ENCODE measurements at regions of chr1 and their contacts with region 1.

Region 1: DNA sequence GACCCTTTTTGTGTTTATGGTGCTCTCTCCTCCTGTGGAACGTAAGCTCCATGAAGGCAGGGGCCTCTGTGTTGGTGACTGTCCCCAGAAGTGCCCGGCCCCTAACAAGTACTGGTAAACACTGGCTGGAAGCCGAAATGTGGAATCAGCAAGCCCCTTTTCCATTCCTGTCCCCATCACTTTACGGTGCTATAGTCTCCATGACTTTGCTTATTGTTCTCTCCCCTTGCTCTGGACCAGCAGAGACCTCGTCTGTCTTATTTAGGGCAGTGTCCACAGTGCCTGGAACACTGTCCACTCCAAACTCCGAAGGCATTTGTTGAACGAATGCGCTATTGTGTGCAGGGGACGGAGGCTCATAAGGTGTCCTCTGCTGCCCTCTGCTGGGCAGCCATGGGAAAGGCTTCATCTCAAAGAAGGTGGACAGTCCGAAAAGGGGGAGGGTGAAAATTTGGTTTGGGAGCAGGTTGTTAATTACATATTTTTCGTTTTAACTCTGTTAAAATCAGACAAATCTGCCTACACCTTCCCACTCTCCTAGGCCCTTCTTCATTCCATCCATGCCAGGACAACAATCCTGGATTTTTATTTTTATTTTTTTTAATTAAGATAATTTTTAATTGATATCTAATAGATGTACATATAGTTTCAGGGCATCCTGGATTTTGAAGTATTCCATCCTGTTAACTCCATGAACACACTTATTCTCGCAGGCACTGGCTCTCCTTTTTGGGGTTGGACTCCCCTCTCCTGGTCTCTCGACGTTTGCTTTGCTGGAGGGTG is 115.6 kb downstream of the PGBD5 start:
- DNase-seq: peak; percentile 78
- H3K4me3 ChIP-seq: no peak overlapping the region
- H3K27ac ChIP-seq: no peak overlapping the region
- H3K4me1 ChIP-seq: peaks cover 0 to 13% (median 7%) of the 10 kb centered on the region in 4 donors
- H3K27me3 ChIP-seq: no peaks in the 10 kb centered on the region
- CTCF ChIP-seq: peak; percentile 91 to 94 (median 93)
- EP300 ChIP-seq: no peak
- POLR2A ChIP-seq: no peak

Region 2: GRCh38 chr1:229270547-229271447 is 1039.8 kb before region 1 on chr1 and contains the start of gene RAB4A:
- in situ Hi-C with region 1: loop called in 2 of 4 experiments (anchors 25 kb)
- intact Hi-C with region 1: no loop called
- DNase-seq: peak; percentile 92
- H3K4me3 ChIP-seq: peak within 1 kb of the TSS; percentile 67 to 90 (median 80)
- H3K27ac ChIP-seq: peak within 1 kb of the TSS; percentile 86 to 90 (median 87)
- H3K4me1 ChIP-seq: peaks cover 16 to 49% (median 31%) of the 10 kb centered on the region in 4 donors
- H3K27me3 ChIP-seq: no peaks in the 10 kb centered on the region
- CTCF ChIP-seq: no peak
- EP300 ChIP-seq: no peak
- POLR2A ChIP-seq: peak; percentile 79
- total RNA-seq, gene RAB4A: 7.4 to 56.9 (median 28.0) TPM

Region 3: DNA sequence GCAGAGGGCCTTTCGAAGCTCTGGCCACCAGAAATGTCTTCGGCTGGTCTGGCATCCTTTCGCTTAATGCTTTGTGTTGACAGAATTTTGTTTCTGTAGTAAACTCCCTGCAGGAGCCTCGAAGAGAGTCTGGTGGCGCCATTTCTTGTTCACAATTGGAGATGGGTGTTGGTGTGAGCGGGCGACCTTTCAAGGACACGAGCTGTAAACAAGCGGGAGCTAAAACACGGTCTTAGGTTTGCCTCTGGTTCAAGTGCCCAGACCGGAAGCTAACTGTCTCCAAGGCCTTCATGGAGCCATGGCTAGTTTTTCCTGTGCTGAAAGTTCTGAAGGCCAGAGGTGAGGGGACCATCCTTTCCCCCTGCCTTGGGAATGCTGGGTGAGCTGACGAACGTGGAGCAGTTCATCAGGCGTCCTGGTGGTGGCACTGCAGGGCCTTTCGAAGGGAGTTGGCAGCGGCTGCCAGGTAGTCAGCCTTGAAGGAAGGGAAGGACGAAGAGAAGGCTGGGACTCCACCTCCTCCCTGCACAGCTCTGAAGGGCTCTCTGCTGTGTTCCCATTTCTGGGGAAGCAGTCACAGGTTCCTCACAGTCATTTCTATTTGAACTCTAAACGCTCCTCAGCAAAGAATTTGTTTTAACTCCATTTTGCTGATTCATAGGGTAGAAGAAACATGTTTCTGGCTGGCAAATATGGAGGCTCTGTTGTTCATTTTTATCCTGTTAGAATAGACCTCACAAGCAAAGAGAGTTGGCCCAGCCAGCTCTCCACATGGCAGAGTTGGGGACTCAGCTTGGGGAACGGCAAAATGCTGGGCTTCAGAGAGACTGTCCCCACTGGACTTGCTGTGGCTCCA is 649.3 kb before region 1 on chr1:
- in situ Hi-C with region 1: loop called (anchors 5 to 10 kb)
- intact Hi-C with region 1: loop called (anchors 10 kb)
- DNase-seq: peak; percentile 85
- H3K4me3 ChIP-seq: no peak overlapping the region
- H3K27ac ChIP-seq: no peak overlapping the region
- H3K4me1 ChIP-seq: peaks cover 0 to 17% (median 2%) of the 10 kb centered on the region in 4 donors
- H3K27me3 ChIP-seq: no peaks in the 10 kb centered on the region
- CTCF ChIP-seq: peak; percentile 88 to 94 (median 91)
- EP300 ChIP-seq: no peak
- POLR2A ChIP-seq: no peak

Region 4: GRCh38 chr1:229879746-229880145 is 430.8 kb before region 1 on chr1:
- in situ Hi-C with region 1: loop called in 1 of 4 experiments (anchors 10 kb)
- intact Hi-C with region 1: no loop called
- DNase-seq: no peak
- H3K4me3 ChIP-seq: no peak overlapping the region
- H3K27ac ChIP-seq: peak overlapping the region in 2 of 4 donors; percentile 12 to 15
- H3K4me1 ChIP-seq: no peaks in the 10 kb centered on the region
- H3K27me3 ChIP-seq: no peaks in the 10 kb centered on the region
- CTCF ChIP-seq: no peak
- EP300 ChIP-seq: no peak
- POLR2A ChIP-seq: no peak

Region 5: DNA sequence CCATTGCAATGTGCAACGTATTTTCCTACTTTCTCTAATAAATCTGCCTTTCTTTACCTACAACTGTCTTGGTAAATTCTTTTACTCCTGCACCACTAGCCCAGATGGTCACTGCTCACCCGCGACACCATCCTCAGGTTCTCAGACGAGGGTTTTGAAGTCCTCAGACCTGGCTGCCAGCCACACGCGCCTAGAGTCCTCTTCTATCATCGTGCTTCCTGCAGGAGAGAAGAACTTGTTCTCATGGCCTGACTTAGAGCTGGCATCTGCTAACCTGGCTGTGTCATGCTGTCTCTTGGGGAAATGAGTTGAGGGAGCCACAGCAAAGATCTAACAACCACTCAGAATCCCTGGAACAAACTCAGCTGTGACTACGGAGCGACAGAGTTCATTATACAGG is 145.9 kb after region 1 on chr1:
- in situ Hi-C with region 1: no loop called
- intact Hi-C with region 1: no loop called
- DNase-seq: no peak
- H3K4me3 ChIP-seq: no peak overlapping the region
- H3K27ac ChIP-seq: no peak overlapping the region
- H3K4me1 ChIP-seq: no peaks in the 10 kb centered on the region
- H3K27me3 ChIP-seq: peaks cover 7% of the 10 kb centered on the region
- CTCF ChIP-seq: no peak
- EP300 ChIP-seq: no peak
- POLR2A ChIP-seq: no peak

Measured in transverse colon (tissue), 4 donors.